ENCODE measurements at regions of chr16 and their contacts with region 1.

Region 1: GRCh38 chr16:89484923-89485679 is 5.3 kb downstream of the ANKRD11 start:
- DNase-seq: peak in 4 of 10 donors; percentile 25 to 60 (median 46)
- ATAC-seq: peak in 1 of 2 donors; percentile 15
- H3K4me3 Mint-ChIP-seq: peak overlapping the region; percentile 73 to 94 (median 89)
- H3K27ac Mint-ChIP-seq: peak overlapping the region; percentile 87 to 99 (median 96)
- H3K4me1 Mint-ChIP-seq: peaks cover 60 to 90% (median 87%) of the 10 kb centered on the region in 4 donors
- H3K27me3 Mint-ChIP-seq: no peaks in the 10 kb centered on the region

Region 2: DNA sequence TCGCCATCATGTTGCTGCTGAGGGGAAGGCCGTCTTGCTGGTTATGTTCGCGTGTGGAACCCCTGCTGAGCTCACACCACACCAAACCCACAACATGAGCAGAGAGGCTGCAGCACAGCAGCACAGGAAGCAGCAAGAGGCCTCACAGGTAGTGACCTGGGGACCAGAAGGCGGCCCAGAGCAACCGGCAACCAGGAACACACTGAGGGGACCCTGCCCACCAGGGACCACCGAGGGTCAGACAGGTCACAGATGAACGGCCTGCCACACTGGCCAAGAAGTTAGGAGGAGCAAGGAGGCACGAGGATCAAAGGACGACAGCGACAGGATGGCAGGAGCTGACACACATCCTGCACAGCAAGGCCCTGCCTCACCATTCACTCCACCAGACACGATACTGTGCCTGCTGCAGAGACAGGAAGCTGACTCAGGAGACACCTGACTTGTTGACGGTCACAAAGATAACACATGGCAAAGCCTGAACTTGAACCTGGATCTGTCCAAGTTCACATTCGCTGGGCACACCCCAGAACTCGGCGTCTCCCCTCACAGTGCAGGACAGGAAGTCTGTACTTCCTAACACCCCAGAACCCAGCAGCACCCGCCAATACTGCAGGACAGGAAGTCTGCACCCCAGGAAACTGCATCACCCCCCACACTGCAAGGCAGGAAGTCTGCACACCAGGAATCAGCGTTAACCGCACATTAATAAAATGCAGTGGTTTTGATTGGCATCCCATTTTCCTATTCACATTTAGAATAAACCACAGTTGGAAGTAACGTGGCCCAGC is 169.1 kb before region 1 on chr16:
- POLR2A ChIA-PET with region 1: interaction called, 12 read pairs
- DNase-seq: peak; percentile 42 to 87 (median 74)
- ATAC-seq: peak; percentile 86
- H3K4me3 Mint-ChIP-seq: peak overlapping the region; percentile 70 to 90 (median 84)
- H3K27ac Mint-ChIP-seq: peak overlapping the region; percentile 93 to 99 (median 98)
- H3K4me1 Mint-ChIP-seq: peaks cover 49 to 99% (median 95%) of the 10 kb centered on the region in 4 donors
- H3K27me3 Mint-ChIP-seq: no peaks in the 10 kb centered on the region

Region 3: GRCh38 chr16:89458551-89458950 is 26.6 kb before region 1 on chr16:
- POLR2A ChIA-PET with region 1: interaction called, 11 read pairs
- DNase-seq: no peak
- ATAC-seq: no peak
- H3K4me3 Mint-ChIP-seq: peak overlapping the region in 5 of 10 donors; percentile 15 to 37 (median 24)
- H3K27ac Mint-ChIP-seq: peak overlapping the region in 9 of 10 donors; percentile 7 to 80 (median 56)
- H3K4me1 Mint-ChIP-seq: peaks cover 34 to 74% (median 66%) of the 10 kb centered on the region in 4 donors
- H3K27me3 Mint-ChIP-seq: no peaks in the 10 kb centered on the region

Region 4: GRCh38 chr16:89467382-89467781 is 17.7 kb before region 1 on chr16:
- POLR2A ChIA-PET with region 1: interaction called, 14 read pairs
- DNase-seq: no peak
- ATAC-seq: no peak
- H3K4me3 Mint-ChIP-seq: peak overlapping the region in 6 of 10 donors; percentile 21 to 54 (median 36)
- H3K27ac Mint-ChIP-seq: peak overlapping the region in 9 of 10 donors; percentile 30 to 75 (median 65)
- H3K4me1 Mint-ChIP-seq: peaks cover 26 to 88% (median 76%) of the 10 kb centered on the region in 4 donors
- H3K27me3 Mint-ChIP-seq: no peaks in the 10 kb centered on the region

Region 5: GRCh38 chr16:89472711-89473075 is 12.4 kb before region 1 on chr16:
- POLR2A ChIA-PET with region 1: interaction called, 14 read pairs
- DNase-seq: no peak
- ATAC-seq: peak in 1 of 2 donors; percentile 22
- H3K4me3 Mint-ChIP-seq: peak overlapping the region in 9 of 10 donors; percentile 55 to 83 (median 76)
- H3K27ac Mint-ChIP-seq: peak overlapping the region; percentile 19 to 90 (median 78)
- H3K4me1 Mint-ChIP-seq: peaks cover 43 to 95% (median 88%) of the 10 kb centered on the region in 4 donors
- H3K27me3 Mint-ChIP-seq: no peaks in the 10 kb centered on the region

Measured in naive thymus-derived CD8-positive, alpha-beta T cell (primary cell).